Posterior vena cava (tissue), 2 donors: ENCODE measurements at regions of chr9 and their contacts with region 1.

Region 1: GRCh38 chr9:85640425-85640824 is 101.3 kb downstream of the AGTPBP1 start:
- DNase-seq: no peak

Region 2: DNA sequence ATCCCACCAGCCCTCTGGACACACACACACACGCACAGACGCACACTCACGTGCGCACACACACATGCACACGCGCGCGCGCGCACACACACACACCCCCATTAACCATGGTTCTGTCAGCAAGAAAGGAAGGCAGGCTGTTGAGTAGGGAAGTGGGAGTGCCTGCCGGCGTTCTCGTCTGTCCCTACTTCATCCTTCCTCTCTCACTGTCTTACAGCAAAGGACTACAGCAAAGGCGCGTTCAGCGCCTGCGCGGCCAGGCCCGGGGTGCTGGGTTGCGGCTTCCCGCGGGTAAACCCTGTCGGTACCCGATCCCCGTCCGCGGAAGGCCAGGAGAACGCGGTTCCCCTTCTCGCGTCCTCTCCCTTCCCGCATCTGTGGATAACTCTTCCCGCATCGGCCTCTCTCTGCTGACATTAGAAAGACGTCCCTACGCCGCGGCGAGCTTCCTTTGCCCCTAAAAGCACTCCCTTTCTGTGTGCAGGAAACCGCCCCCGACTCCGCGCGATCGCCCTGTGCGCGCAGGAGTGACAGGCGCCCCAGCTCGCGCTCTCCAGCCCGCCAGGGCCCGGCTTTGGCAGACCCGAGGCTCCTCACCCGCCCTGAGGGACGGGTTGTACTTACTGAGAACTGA is 117.8 kb before region 1 on chr9:
- intact Hi-C with region 1: no loop called
- DNase-seq: peak; percentile 86

Region 3: GRCh38 chr9:85569988-85570387 is 70.4 kb before region 1 on chr9:
- intact Hi-C with region 1: loop called in 1 of 2 experiments (anchors 5 kb)
- DNase-seq: no peak